ENCODE measurements at regions of chr3 and their contacts with region 1.

Region 1: GRCh38 chr3:188476935-188477334 is 323.0 kb downstream of the LPP start:
- DNase-seq: no peak
- H3K4me3 ChIP-seq: no peak overlapping the region
- H3K4me3 Mint-ChIP-seq: no peak overlapping the region
- H3K27ac Mint-ChIP-seq: no peak overlapping the region
- H3K4me1 ChIP-seq: peaks cover 3% of the 10 kb centered on the region; the same call in 1 of the 2 replicates
- H3K4me1 Mint-ChIP-seq: peaks cover 7% of the 10 kb centered on the region
- H3K27me3 ChIP-seq: no peaks in the 10 kb centered on the region
- H3K27me3 Mint-ChIP-seq: no peaks in the 10 kb centered on the region
- CTCF ChIP-seq: no peak

Region 2: GRCh38 chr3:188407158-188407880 is 69.6 kb before region 1 on chr3:
- CTCF ChIA-PET with region 1: no interaction called
- POLR2A ChIA-PET with region 1: no interaction called
- intact Hi-C with region 1: no loop called
- DNase-seq: no peak
- H3K4me3 ChIP-seq: no peak overlapping the region
- H3K4me3 Mint-ChIP-seq: no peak overlapping the region
- H3K27ac Mint-ChIP-seq: peak overlapping the region; percentile 11
- H3K4me1 ChIP-seq: no peaks in the 10 kb centered on the region
- H3K4me1 Mint-ChIP-seq: no peaks in the 10 kb centered on the region
- H3K27me3 ChIP-seq: no peaks in the 10 kb centered on the region
- H3K27me3 Mint-ChIP-seq: no peaks in the 10 kb centered on the region
- CTCF ChIP-seq: no peak

Region 3: DNA sequence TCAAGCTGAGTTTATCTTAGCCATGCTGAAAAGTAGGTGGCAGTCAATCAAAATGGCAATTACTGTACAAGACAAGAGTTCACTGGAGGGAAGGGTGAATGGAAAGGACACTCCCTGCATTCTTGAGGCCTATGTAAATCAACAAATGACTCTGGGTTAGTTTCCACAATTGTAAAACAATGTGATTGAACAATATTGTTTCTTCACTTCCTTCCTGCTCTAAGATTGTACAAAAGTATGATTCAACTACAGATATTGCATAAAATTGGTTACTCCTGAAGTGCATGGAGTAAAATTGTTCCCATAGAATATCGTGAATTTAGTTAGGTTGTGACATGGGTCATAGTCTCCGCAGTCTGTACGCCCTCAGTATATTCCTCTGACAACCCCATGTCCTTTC is 45.4 kb before region 1 on chr3:
- CTCF ChIA-PET with region 1: no interaction called
- POLR2A ChIA-PET with region 1: interaction called, 4 read pairs
- intact Hi-C with region 1: loop called (anchors 1 kb)
- DNase-seq: peak in 1 of 2 experiments; percentile 22
- H3K4me3 ChIP-seq: no peak overlapping the region
- H3K4me3 Mint-ChIP-seq: no peak overlapping the region
- H3K27ac Mint-ChIP-seq: peak overlapping the region; percentile 81
- H3K4me1 ChIP-seq: peaks cover 34% of the 10 kb centered on the region
- H3K4me1 Mint-ChIP-seq: peaks cover 33% of the 10 kb centered on the region
- H3K27me3 ChIP-seq: no peaks in the 10 kb centered on the region
- H3K27me3 Mint-ChIP-seq: no peaks in the 10 kb centered on the region
- CTCF ChIP-seq: no peak

Measured in Caco-2 (cell line).